ENCODE measurements at regions of chr5 and their contacts with region 1.

Region 1: GRCh38 chr5:142215915-142216681 is 107.5 kb downstream of the NDFIP1 start:
- DNase-seq: peak; percentile 97
- ATAC-seq: peak; percentile 95
- H3K4me3 ChIP-seq: peak overlapping the region; percentile 43; the same call in 1 of the 2 replicates
- H3K27ac ChIP-seq: peak overlapping the region; percentile 91
- H3K4me1 ChIP-seq: peaks cover 38% of the 10 kb centered on the region
- H3K27me3 ChIP-seq: no peaks in the 10 kb centered on the region
- CTCF ChIP-seq: no peak

Region 2: GRCh38 chr5:142246258-142246657 is 30.2 kb after region 1 on chr5:
- CTCF ChIA-PET with region 1: no interaction called
- POLR2A ChIA-PET with region 1: interaction called, 5 read pairs
- intact Hi-C with region 1: loop called (anchors 1 kb)
- DNase-seq: peak; percentile 32
- ATAC-seq: peak; percentile 57
- H3K4me3 ChIP-seq: no peak overlapping the region
- H3K27ac ChIP-seq: no peak overlapping the region
- H3K4me1 ChIP-seq: peaks cover 34% of the 10 kb centered on the region
- H3K27me3 ChIP-seq: no peaks in the 10 kb centered on the region
- CTCF ChIP-seq: no peak